PC-3 (cell line): ENCODE measurements at regions of chr5 and their contacts with region 1.

Region 1: GRCh38 chr5:87127956-87128687 is 139.6 kb upstream of the RASA1 start:
- DNase-seq: peak; percentile 98
- ATAC-seq: peak; percentile 85
- H3K4me3 ChIP-seq: peak overlapping the region; percentile 0; the same call in 1 of the 2 replicates
- H3K27ac ChIP-seq: peak overlapping the region; percentile 59
- H3K4me1 ChIP-seq: peaks cover 41% of the 10 kb centered on the region
- H3K27me3 ChIP-seq: no peaks in the 10 kb centered on the region
- CTCF ChIP-seq: no peak

Region 2: GRCh38 chr5:86427158-86427557 is 701.0 kb before region 1 on chr5:
- CTCF ChIA-PET with region 1: no interaction called
- POLR2A ChIA-PET with region 1: no interaction called
- intact Hi-C with region 1: no loop called
- DNase-seq: no peak
- ATAC-seq: no peak
- H3K4me3 ChIP-seq: no peak overlapping the region
- H3K27ac ChIP-seq: no peak overlapping the region
- H3K4me1 ChIP-seq: no peaks in the 10 kb centered on the region
- H3K27me3 ChIP-seq: no peaks in the 10 kb centered on the region
- CTCF ChIP-seq: no peak

Region 3: GRCh38 chr5:87354496-87354895 is 226.4 kb after region 1 on chr5:
- CTCF ChIA-PET with region 1: no interaction called
- POLR2A ChIA-PET with region 1: interaction called, 17 read pairs
- intact Hi-C with region 1: no loop called
- DNase-seq: no peak
- ATAC-seq: no peak
- H3K4me3 ChIP-seq: no peak overlapping the region
- H3K27ac ChIP-seq: no peak overlapping the region
- H3K4me1 ChIP-seq: no peaks in the 10 kb centered on the region
- H3K27me3 ChIP-seq: no peaks in the 10 kb centered on the region
- CTCF ChIP-seq: no peak